Activated naive CD4-positive, alpha-beta T cell treated with anti-CD3 and anti-CD28 coated beads for 36 hours (primary cell): ENCODE measurements at regions of chr10 and their contacts with region 1.

Region 1: GRCh38 chr10:124106241-124106879 is 13.0 kb upstream of the CHST15 start:
- DNase-seq: no peak
- H3K4me3 Mint-ChIP-seq: no peak overlapping the region
- H3K27ac Mint-ChIP-seq: no peak overlapping the region
- H3K4me1 Mint-ChIP-seq: no peaks in the 10 kb centered on the region
- H3K27me3 Mint-ChIP-seq: peaks cover 1% of the 10 kb centered on the region

Region 2: DNA sequence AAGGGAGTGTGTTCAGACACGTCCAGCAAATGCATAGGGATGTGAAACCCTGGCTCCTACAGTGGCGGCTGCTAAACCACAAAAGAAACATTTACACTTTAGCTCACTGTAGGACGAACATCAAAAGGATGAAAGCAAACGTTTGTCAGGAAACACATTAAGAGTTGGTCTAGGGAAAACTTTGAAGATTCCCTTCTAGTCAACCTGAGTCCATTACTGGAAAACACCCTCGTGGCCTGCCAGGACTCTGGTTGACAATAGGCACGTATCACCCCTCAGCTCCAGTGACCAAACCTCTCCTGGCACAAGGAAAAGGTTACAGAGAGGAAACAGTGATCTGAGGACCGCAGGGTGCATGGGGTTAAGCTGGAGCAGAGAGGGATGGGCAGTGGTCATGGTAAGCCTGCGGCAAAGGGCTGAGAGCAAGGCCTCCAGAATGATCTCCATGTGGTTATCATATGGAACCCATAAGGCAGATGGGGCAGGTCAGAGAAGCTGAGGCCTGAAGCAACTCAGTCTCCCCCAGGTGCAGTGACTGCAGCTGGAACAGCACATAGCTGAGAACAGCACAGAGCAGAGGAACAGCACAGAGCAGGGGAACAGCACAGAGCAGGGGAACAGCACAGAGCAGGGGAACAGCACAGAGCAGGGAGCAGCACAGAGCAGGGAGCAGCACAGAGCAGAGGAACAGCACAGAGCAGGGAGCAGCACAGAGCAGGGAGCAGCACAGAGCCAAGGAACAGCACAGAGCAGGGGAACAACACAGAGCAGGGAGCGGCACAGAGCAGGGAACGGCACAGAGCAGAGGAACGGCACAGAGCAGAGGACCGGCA is 62.8 kb before region 1 on chr10:
- CTCF ChIA-PET with region 1: no interaction called
- intact Hi-C with region 1: loop called (anchors 10 kb)
- DNase-seq: peak; percentile 47
- H3K4me3 Mint-ChIP-seq: no peak overlapping the region
- H3K27ac Mint-ChIP-seq: no peak overlapping the region
- H3K4me1 Mint-ChIP-seq: peaks cover 12% of the 10 kb centered on the region
- H3K27me3 Mint-ChIP-seq: no peaks in the 10 kb centered on the region